CD4-positive, alpha-beta T cell (primary cell): ENCODE measurements at regions of chr12 and their contacts with region 1.

Region 1: GRCh38 chr12:55817346-55818139 is at the starts of genes ORMDL2 and SARNP:
- DNase-seq: peak; percentile 88 to 100 (median 92)
- ATAC-seq: peak; percentile 92
- H3K4me3 ChIP-seq: peak within 1 kb of the TSS; percentile 97
- H3K4me3 Mint-ChIP-seq: no peak within 1 kb of the TSS
- H3K27ac ChIP-seq: peak within 1 kb of the TSS; percentile 71 to 87
- H3K27ac Mint-ChIP-seq: no peak within 1 kb of the TSS
- H3K4me1 ChIP-seq: peaks cover 40% of the 10 kb centered on the region
- H3K4me1 Mint-ChIP-seq: peaks cover 28% of the 10 kb centered on the region
- H3K27me3 ChIP-seq: no peaks in the 10 kb centered on the region
- H3K27me3 Mint-ChIP-seq: no peaks in the 10 kb centered on the region
- CTCF ChIP-seq: no peak
- total RNA-seq, gene ORMDL2: 13.0 to 14.9 TPM
- total RNA-seq, gene SARNP: 38.2 to 38.6 TPM

Region 2: DNA sequence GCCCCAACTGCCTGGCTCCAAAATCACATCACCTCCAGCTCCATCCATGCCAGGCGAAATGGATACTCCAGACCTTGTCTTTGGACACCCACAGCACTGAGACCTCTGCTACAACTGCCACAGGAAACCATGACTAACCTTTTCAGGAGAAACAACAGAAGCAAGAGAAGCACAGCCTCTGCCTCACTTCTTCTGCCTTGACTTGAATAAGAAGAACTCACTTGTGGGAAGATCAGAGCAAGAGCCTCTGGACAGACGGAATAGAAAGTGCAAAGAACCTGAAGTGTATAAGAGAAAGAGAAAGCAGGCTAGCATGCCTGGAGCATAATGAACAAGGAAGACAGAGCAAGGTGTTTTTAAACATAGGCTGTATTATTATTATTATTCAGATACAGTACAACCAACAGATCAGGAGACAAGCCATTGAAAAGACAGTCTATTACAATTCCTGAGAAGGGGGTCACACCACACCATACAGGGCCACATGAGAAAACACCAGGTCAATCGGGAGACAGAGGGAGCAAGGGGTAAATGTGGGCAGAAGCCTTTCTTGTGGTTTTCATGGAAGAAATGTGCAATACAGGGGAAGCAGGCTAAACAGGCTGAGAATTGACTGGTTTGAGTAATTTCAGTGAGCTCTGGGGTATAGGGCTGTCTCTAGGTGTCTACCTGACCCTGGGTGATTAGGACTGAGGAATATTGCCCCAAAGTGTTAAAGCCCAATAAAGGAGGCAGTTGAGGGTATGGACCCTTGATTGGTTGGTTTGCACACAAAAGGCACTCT is 188.3 kb before region 1 on chr12:
- CTCF ChIA-PET with region 1: no interaction called
- POLR2A ChIA-PET with region 1: no interaction called
- intact Hi-C with region 1: no loop called
- DNase-seq: no peak
- ATAC-seq: no peak
- H3K4me3 ChIP-seq: no peak overlapping the region
- H3K4me3 Mint-ChIP-seq: no peak overlapping the region
- H3K27ac ChIP-seq: no peak overlapping the region
- H3K27ac Mint-ChIP-seq: no peak overlapping the region
- H3K4me1 ChIP-seq: peaks cover 4% of the 10 kb centered on the region
- H3K4me1 Mint-ChIP-seq: peaks cover 4% of the 10 kb centered on the region
- H3K27me3 ChIP-seq: no peaks in the 10 kb centered on the region
- H3K27me3 Mint-ChIP-seq: no peaks in the 10 kb centered on the region
- CTCF ChIP-seq: no peak

Region 3: GRCh38 chr12:55715833-55716581 is 101.5 kb before region 1 on chr12 and contains the start of gene BLOC1S1:
- CTCF ChIA-PET with region 1: no interaction called
- POLR2A ChIA-PET with region 1: interaction called, 17 read pairs
- intact Hi-C with region 1: no loop called
- DNase-seq: peak; percentile 86 to 96 (median 90)
- ATAC-seq: peak; percentile 97
- H3K4me3 ChIP-seq: peak within 1 kb of the TSS; percentile 75
- H3K4me3 Mint-ChIP-seq: peak within 1 kb of the TSS; percentile 96
- H3K27ac ChIP-seq: peak within 1 kb of the TSS; percentile 93 to 94
- H3K27ac Mint-ChIP-seq: peak within 1 kb of the TSS; percentile 92
- H3K4me1 ChIP-seq: peaks cover 43% of the 10 kb centered on the region
- H3K4me1 Mint-ChIP-seq: peaks cover 34% of the 10 kb centered on the region
- H3K27me3 ChIP-seq: no peaks in the 10 kb centered on the region
- H3K27me3 Mint-ChIP-seq: peaks cover 4% of the 10 kb centered on the region
- CTCF ChIP-seq: no peak
- total RNA-seq, gene BLOC1S1: 34.8 to 36.9 TPM

Region 4: DNA sequence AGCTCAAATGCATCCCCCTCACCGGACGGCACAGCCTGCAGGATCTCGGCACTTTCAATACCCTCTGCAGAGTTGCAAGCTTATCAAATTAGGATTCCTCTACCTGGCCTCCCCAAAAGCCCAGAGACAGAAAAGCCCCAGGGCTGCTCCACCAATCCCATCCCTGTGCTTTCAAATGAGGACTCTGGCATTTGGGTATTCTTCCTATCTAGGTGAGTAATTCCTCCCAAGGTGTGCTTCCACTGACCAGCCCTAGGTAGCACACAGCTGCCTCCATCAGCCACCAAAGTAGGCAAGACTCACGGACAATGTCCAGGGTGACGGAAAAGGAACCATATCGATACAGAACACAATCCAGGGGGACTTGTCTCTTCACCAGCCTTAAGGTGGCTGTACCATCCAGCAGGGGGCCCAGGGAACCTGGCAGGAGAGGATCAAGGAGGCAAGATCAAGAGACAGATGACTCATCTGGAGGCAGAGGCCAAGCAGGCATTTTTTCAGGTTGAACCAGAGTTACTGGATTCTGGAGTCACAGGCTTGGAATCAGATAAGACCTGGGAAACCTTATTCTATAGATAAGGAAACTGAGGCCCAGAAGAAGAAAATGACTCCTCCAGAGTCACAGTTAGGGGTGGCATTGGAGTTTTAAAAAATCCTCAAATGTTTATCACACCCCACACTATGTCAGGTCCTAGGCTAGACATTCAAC is 138.4 kb after region 1 on chr12:
- CTCF ChIA-PET with region 1: no interaction called
- POLR2A ChIA-PET with region 1: interaction called, 22 read pairs
- intact Hi-C with region 1: no loop called
- DNase-seq: peak in 12 of 14 experiments; percentile 24 to 75 (median 50)
- ATAC-seq: peak; percentile 77
- H3K4me3 ChIP-seq: no peak overlapping the region
- H3K4me3 Mint-ChIP-seq: no peak overlapping the region
- H3K27ac ChIP-seq: peak overlapping the region in 1 of 2 donors; percentile 24
- H3K27ac Mint-ChIP-seq: peak overlapping the region; percentile 66
- H3K4me1 ChIP-seq: peaks cover 20% of the 10 kb centered on the region
- H3K4me1 Mint-ChIP-seq: peaks cover 25% of the 10 kb centered on the region
- H3K27me3 ChIP-seq: no peaks in the 10 kb centered on the region
- H3K27me3 Mint-ChIP-seq: no peaks in the 10 kb centered on the region
- CTCF ChIP-seq: peak; percentile 47

Region 5: GRCh38 chr12:55996715-55997534 is 179.4 kb after region 1 on chr12 and contains the start of gene SUOX:
- CTCF ChIA-PET with region 1: no interaction called
- POLR2A ChIA-PET with region 1: no interaction called
- intact Hi-C with region 1: no loop called
- DNase-seq: peak in 5 of 14 experiments; percentile 8 to 69 (median 48)
- ATAC-seq: peak; percentile 33
- H3K4me3 ChIP-seq: peak within 1 kb of the TSS; percentile 43
- H3K4me3 Mint-ChIP-seq: peak within 1 kb of the TSS; percentile 51
- H3K27ac ChIP-seq: no peak within 1 kb of the TSS
- H3K27ac Mint-ChIP-seq: no peak within 1 kb of the TSS
- H3K4me1 ChIP-seq: peaks cover 17% of the 10 kb centered on the region
- H3K4me1 Mint-ChIP-seq: peaks cover 23% of the 10 kb centered on the region
- H3K27me3 ChIP-seq: peaks cover 5 to 12% of the 10 kb centered on the region in 2 experiments
- H3K27me3 Mint-ChIP-seq: peaks cover 20% of the 10 kb centered on the region
- CTCF ChIP-seq: no peak
- total RNA-seq, gene SUOX: 0.82 to 1.2 TPM

Region 6: DNA sequence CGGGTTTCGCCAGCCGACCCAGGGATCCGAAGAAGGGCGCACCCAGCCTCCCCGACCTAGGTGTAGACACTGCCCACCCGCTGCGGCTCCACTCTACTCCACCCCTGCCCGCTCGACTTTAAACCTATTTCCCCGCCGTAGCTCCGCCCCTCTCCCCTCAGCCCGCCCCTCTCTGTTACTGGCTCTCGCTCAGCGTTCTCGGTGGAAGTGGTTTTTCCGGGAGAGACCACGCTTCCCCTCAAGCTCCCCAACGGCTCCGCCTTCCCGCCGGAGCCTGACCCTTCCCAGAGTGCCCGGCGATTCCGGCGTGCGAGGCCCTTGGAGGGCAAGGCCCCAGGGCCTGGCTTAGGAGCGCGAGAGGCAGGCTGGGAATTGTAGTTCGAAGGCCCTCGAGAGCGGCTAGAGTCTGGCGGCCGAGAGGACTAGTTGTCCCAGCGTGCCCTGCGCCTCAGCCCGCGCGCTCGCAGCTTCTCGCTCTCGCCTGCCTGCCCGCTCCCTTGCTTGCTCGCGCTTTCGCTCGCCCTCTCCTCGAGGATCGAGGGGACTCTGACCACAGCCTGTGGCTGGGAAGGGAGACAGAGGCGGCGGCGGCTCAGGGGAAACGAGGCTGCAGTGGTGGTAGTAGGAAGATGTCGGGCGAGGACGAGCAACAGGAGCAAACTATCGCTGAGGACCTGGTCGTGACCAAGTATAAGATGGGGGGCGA is 286.7 kb after region 1 on chr12 and contains the start of gene PA2G4:
- CTCF ChIA-PET with region 1: no interaction called
- POLR2A ChIA-PET with region 1: interaction called, 10 read pairs
- intact Hi-C with region 1: loop called in 1 of 2 experiments (anchors 10 kb)
- DNase-seq: peak; percentile 89 to 99 (median 96)
- ATAC-seq: peak; percentile 88
- H3K4me3 ChIP-seq: peak within 1 kb of the TSS; percentile 90
- H3K4me3 Mint-ChIP-seq: peak within 1 kb of the TSS; percentile 93
- H3K27ac ChIP-seq: peak within 1 kb of the TSS; percentile 63 to 95
- H3K27ac Mint-ChIP-seq: peak within 1 kb of the TSS; percentile 100
- H3K4me1 ChIP-seq: peaks cover 48% of the 10 kb centered on the region
- H3K4me1 Mint-ChIP-seq: peaks cover 67% of the 10 kb centered on the region
- H3K27me3 ChIP-seq: no peaks in the 10 kb centered on the region
- H3K27me3 Mint-ChIP-seq: no peaks in the 10 kb centered on the region
- CTCF ChIP-seq: no peak
- total RNA-seq, gene PA2G4: 51.0 to 61.0 TPM